ENCODE measurements at regions of chr2 and their contacts with region 1.

Region 1: GRCh38 chr2:140473851-140474250 is 1657.0 kb downstream of the LRP1B start:
- DNase-seq: no peak
- H3K4me3 ChIP-seq: no peak overlapping the region
- H3K27ac ChIP-seq: no peak overlapping the region
- H3K4me1 ChIP-seq: no peaks in the 10 kb centered on the region
- CTCF ChIP-seq: no peak

Region 2: GRCh38 chr2:140489193-140489592 is 15.3 kb after region 1 on chr2:
- CTCF ChIA-PET with region 1: no interaction called
- POLR2A ChIA-PET with region 1: no interaction called
- intact Hi-C with region 1: no loop called
- DNase-seq: no peak
- H3K4me3 ChIP-seq: no peak overlapping the region
- H3K27ac ChIP-seq: no peak overlapping the region
- H3K4me1 ChIP-seq: no peaks in the 10 kb centered on the region
- CTCF ChIP-seq: no peak

Region 3: GRCh38 chr2:140508756-140509155 is 34.9 kb after region 1 on chr2:
- CTCF ChIA-PET with region 1: no interaction called
- POLR2A ChIA-PET with region 1: interaction called, 11 read pairs
- intact Hi-C with region 1: no loop called
- DNase-seq: no peak
- H3K4me3 ChIP-seq: no peak overlapping the region
- H3K27ac ChIP-seq: no peak overlapping the region
- H3K4me1 ChIP-seq: no peaks in the 10 kb centered on the region
- CTCF ChIP-seq: no peak

Region 4: GRCh38 chr2:140718999-140719398 is 245.1 kb after region 1 on chr2:
- CTCF ChIA-PET with region 1: no interaction called
- POLR2A ChIA-PET with region 1: no interaction called
- intact Hi-C with region 1: no loop called
- DNase-seq: no peak
- H3K4me3 ChIP-seq: no peak overlapping the region
- H3K27ac ChIP-seq: no peak overlapping the region
- H3K4me1 ChIP-seq: no peaks in the 10 kb centered on the region
- CTCF ChIP-seq: no peak

Measured in OCI-LY7 (cell line).